Colonic mucosa (tissue), 4 donors: ENCODE measurements at regions of chr17 and their contacts with region 1.

Region 1: DNA sequence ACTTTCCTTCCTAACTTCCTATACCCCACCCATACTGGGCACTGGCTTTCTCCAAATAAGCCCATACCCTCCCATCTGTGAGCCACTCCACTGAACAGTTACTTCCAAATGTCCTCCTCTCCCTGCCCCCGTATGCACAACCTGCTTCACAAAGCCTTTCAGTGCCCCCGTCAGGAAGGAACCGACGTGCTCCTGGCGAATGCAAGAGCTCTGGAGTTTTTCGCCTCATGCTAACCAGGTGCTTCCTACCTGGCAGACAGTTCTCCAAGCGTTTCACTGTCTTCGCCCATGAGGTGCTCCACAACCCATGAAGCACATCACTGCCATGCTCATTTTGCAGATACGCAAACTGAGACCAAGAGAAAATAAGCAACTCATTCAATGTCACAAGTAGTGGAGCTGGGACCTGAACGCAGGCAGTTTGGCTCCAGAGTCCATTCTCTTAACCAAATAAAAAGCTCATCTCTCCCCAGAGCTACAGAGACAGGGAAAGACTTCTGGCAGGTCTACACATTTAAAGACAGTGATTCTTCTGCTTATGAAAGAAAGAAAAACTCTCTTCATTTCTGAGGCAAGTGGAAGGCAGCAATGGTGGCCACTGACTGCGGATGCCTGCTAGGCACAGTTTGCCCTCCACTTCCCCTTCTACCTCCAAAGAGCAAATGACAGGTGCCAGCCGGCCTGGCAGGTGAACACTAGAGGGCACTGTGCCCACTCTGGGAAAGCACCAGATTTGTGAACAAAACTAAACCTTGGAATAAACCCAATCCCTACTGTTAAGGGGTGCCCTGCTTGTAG is 23.8 kb downstream of the SPHK1 start:
- DNase-seq: peak; percentile 78
- H3K4me3 ChIP-seq: no peak overlapping the region
- H3K27ac ChIP-seq: no peak overlapping the region
- H3K4me1 ChIP-seq: no peaks in the 10 kb centered on the region
- H3K27me3 ChIP-seq: no peaks in the 10 kb centered on the region
- CTCF ChIP-seq: peak; percentile 86

Region 2: GRCh38 chr17:76354747-76355310 is 53.4 kb before region 1 on chr17:
- intact Hi-C with region 1: no loop called
- DNase-seq: no peak
- H3K4me3 ChIP-seq: no peak overlapping the region
- H3K27ac ChIP-seq: no peak overlapping the region
- H3K4me1 ChIP-seq: no peaks in the 10 kb centered on the region
- H3K27me3 ChIP-seq: no peaks in the 10 kb centered on the region
- CTCF ChIP-seq: no peak

Region 3: DNA sequence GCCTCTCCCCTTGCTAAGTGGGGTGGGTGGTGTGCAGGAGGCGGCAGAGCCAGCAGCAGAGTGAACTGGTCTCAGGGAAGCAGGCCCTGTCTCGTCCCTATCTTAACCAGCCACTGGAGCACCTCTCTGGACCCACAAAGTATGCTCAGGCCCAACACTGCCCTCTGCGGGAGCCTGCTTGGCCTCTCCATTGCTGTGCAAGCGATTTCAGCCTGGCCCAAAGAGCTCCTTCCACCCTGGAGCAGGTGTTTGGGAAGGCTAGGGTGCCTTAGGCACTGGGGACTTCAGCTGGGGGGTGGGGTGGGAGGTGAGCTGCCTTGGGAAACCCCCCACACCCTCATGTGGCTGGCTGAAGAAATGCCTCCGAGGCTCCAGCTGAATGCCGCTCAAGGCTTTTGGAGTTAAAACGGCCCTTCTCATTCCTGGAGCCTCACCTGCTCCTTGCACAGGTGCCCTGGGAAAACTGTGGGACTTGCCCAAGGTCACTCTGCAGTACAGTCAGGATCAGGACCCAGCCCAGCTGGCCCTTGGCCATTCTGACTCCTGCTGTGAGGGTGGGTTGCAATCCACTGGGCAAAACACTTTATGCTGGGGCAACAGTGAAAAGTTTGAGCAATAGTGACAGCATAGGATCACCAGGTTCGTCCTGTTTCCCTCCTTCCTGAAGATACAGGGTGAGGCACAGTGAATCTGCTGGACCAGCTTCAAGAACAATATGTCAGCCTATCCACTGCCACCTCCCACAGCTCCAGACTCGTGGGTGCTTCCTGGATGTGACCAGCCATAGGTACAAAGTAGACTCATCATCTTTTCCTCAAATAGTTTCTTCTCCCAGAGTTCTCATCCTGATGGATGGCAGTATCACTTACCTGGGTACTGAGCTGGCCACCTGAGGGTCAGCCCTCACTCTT is 50.6 kb after region 1 on chr17:
- intact Hi-C with region 1: loop called (anchors 5 kb)
- DNase-seq: peak; percentile 56
- H3K4me3 ChIP-seq: no peak overlapping the region
- H3K27ac ChIP-seq: no peak overlapping the region
- H3K4me1 ChIP-seq: no peaks in the 10 kb centered on the region
- H3K27me3 ChIP-seq: no peaks in the 10 kb centered on the region
- CTCF ChIP-seq: peak; percentile 40